Left colon (tissue), 2 donors: ENCODE measurements at regions of chr13 and their contacts with region 1.

Region 1: GRCh38 chr13:111216166-111216960 is 101.3 kb downstream of the ARHGEF7 start:
- DNase-seq: peak in 1 of 2 donors; percentile 44
- ATAC-seq: peak; percentile 76

Region 2: DNA sequence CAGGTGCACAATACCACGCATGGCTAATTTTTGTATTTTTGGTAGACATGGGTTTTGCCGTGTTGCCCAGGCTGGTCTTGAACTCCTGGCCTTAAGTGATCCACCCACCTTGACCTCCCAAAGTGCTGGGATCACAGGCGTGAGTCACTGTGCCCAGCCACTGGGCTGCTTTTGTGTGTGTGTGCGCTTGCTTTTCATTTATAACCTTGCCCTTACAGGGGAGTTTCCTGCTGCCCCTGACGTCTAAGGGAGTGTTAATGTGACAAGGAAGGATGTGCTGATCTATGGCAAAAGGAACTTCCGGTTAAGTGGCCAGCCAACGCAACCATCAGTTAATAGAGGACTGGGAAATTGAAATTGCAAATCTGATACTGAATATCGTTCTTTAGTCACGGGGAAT is 445.2 kb before region 1 on chr13:
- intact Hi-C with region 1: no loop called
- DNase-seq: no peak
- ATAC-seq: no peak

Region 3: DNA sequence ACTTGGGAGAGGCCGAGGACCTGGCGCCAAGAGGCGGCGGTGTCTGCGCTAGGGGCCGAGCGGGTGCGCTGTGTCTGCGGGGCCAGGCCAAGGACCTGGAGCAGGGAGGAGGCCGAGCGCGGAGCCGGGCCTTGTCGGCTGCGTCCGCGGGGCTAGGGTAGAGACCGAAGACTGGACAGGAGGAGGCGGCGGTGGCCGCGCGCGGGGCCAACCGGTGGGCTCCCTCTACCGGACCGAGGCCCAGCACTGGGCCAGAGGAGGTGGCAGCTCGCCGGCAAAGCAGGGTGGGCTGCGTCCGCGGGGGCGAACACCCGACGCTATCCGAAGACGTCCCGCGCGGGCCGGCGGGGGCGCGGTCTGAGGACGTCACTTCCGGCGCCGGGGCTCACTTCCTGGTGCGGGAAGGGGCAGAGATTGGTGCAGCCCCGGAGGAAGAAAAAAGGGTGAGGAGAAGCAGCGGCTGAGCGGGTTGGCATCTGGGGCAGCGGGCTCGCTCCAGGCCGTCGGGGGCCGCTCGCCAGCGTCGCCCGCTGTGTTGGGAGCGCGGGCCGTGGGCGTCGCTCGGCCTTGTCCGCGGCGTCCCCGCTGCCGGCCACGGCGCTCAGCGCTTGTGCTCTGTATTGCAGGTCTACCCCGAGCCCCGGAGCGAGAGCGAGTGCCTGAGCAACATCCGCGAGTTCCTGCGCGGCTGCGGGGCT is 62.9 kb before region 1 on chr13:
- intact Hi-C with region 1: loop called in 1 of 2 experiments (anchors 10 kb)
- DNase-seq: peak; percentile 90 to 93
- ATAC-seq: peak; percentile 92

Region 4: DNA sequence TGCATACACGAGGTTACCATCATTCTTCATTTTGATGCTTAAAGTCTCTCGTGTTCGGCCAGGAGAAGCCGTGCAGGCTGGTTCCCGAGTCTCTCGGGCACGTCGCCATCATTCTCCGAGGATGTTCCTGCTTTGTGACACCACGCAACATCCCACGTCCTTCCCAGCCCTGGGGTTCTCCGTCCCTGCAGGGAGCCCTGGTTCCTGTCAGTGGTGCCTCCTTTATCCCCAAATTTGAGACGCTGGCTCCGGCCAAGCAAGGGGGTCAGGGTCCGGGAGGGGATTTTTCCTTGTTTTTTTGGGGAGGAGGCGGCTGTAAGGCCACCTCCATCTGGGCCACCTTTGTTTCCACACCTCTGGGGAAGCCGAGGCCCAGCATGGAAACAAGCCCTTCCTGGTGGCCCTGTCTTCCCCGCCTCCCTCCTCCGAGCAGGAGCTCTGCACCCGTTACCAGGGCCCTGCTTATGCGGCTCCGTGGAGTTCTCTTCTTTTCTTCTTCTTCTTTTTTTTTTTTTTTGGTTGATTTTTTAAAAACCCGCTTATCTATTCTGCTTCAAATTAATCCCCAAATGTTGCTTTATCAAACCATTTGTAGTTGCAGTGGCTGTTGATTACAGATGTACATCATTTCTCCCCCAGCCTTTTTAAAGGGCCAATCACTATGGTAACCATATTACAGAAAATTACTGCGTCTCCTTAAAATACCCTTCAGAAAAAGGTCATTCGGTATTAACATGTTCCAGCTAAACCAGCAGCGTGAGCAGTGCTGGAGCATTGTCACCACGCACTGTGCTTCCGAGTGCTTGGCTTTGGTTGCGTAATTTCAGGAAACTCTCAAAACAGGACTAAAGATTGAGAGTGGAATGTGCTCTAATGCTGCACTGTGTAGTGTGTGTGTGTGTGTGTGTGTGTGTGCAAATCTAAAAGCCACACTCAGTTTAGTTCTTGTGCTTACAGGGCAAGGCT is 154.5 kb after region 1 on chr13:
- intact Hi-C with region 1: no loop called
- DNase-seq: no peak
- ATAC-seq: no peak